Ascending aorta (tissue), 2 donors: ENCODE measurements at regions of chr5 and their contacts with region 1.

Region 1: GRCh38 chr5:150846654-150847333 is 473 bp downstream of the IRGM start:
- DNase-seq: peak; percentile 18 to 64
- H3K4me3 ChIP-seq: peak overlapping the region in 1 of 2 donors; percentile 21
- H3K27ac ChIP-seq: no peak overlapping the region
- H3K4me1 ChIP-seq: no peaks in the 10 kb centered on the region
- H3K27me3 ChIP-seq: no peaks in the 10 kb centered on the region
- CTCF ChIP-seq: peak; percentile 47 to 81 (median 70)

Region 2: DNA sequence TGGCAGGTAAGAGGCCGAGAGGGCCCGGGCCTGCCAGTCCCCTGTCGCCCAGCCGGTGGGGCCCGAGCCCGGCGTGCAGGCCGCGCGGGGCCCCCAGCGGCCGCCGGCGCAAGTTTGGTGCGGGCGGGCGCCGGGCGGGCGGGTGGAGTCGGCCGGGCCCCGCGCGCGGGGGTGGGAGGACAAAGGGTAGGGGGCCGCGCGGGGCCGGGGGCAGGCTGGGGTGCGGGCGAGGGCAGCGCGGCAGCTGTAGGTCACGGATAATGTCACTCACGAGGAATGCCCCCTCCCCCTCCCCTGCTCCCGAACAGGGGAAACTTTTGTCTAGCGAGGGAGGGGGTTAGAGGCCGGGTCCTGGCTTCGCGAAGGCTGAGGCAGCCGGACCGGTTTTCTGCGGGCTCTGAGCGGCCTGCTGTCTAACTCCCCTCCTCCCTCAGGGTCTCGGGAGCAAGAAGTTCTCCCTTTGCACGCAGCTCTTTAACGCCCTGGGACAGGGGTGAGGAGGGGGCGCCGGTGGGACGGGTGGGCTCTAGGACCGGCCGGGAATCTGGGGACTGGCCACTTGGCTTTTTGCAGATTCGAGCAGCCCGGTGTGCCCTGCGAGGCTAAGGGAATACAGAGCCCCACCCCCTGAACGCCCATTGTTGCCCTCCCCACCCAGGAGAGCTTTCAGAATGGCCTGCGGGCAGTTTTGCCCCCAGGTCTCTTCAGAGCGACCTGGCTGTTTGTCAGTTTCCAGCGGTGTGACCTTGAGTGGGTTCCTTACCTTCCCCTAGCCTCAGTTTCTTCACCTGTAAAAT is 360.2 kb before region 1 on chr5:
- intact Hi-C with region 1: no loop called
- DNase-seq: peak in 1 of 2 donors; percentile 80
- H3K4me3 ChIP-seq: peak overlapping the region; percentile 87 to 98
- H3K27ac ChIP-seq: peak overlapping the region; percentile 95 to 97
- H3K4me1 ChIP-seq: peaks cover 44 to 50% of the 10 kb centered on the region in 2 donors
- H3K27me3 ChIP-seq: no peaks in the 10 kb centered on the region
- CTCF ChIP-seq: no peak

Region 3: DNA sequence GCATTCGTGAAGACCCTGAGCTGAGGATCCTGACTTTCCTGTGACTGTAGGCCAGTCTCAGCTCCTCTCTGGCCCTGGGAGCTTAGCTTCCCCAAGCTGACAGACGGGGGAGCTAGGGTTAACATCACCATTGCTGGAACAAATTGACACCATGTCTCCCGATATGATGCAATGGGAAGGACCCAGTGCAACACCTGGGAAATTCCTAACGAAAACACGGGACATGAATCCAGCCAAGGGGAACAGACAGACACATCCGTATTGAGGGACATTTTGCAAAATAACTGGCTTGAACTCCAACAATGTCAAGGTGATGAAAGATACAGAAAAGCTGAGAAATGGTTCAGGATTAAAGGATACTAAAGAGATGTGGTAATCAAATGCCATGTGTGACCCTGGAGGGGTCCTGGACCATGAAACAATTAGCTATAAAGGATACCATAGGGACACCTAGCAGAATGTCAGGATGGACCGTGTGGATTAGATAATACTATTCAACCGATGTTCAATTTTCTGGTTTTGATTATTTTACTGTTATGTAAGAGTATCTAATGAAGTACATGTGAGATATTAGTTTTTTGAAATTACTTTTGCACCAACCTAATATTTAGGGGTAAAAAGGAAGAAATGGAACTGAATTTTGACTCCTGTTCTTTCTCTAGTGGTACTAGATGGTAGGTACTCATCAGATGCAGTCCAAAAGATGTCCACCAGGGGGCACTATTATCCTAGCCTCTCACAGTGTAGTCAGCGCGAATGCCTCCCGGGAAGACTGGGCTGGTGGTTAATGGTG is 286.2 kb before region 1 on chr5:
- intact Hi-C with region 1: loop called (anchors 1 kb)
- DNase-seq: peak; percentile 35 to 95
- H3K4me3 ChIP-seq: no peak overlapping the region
- H3K27ac ChIP-seq: no peak overlapping the region
- H3K4me1 ChIP-seq: peaks cover 0 to 6% of the 10 kb centered on the region in 2 donors
- H3K27me3 ChIP-seq: no peaks in the 10 kb centered on the region
- CTCF ChIP-seq: peak; percentile 89

Region 4: GRCh38 chr5:150801117-150801927 is 45.5 kb before region 1 on chr5:
- intact Hi-C with region 1: loop called (anchors 1 kb)
- DNase-seq: no peak
- H3K4me3 ChIP-seq: peak overlapping the region; percentile 55 to 58
- H3K27ac ChIP-seq: peak overlapping the region; percentile 52 to 57
- H3K4me1 ChIP-seq: peaks cover 0 to 3% of the 10 kb centered on the region in 2 donors
- H3K27me3 ChIP-seq: no peaks in the 10 kb centered on the region
- CTCF ChIP-seq: peak; percentile 11 to 61 (median 22)

Region 5: DNA sequence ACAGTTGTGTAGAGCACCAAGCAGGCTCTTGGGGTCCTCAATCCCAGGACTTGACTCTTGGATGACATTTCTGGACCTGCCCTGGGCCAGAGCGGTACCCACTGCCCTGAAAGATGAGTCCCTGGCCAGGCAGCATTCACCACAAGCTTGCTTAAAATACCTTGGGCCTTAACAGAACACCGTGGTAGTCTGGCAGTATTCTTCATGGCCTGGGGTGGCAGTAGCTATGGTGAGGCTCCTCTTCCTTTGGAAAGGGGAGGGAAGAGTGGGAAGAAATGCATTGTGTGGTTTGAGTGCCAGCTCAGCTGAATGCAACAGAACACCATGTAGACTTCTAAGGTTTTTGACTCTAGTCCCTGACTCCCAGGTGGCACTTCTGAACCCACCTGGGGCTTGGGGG is 29.8 kb before region 1 on chr5:
- intact Hi-C with region 1: loop called (anchors 1 kb)
- DNase-seq: no peak
- H3K4me3 ChIP-seq: no peak overlapping the region
- H3K27ac ChIP-seq: no peak overlapping the region
- H3K4me1 ChIP-seq: no peaks in the 10 kb centered on the region
- H3K27me3 ChIP-seq: no peaks in the 10 kb centered on the region
- CTCF ChIP-seq: no peak